Panc1 (cell line): ENCODE measurements at regions of chr2 and their contacts with region 1.

Region 1: DNA sequence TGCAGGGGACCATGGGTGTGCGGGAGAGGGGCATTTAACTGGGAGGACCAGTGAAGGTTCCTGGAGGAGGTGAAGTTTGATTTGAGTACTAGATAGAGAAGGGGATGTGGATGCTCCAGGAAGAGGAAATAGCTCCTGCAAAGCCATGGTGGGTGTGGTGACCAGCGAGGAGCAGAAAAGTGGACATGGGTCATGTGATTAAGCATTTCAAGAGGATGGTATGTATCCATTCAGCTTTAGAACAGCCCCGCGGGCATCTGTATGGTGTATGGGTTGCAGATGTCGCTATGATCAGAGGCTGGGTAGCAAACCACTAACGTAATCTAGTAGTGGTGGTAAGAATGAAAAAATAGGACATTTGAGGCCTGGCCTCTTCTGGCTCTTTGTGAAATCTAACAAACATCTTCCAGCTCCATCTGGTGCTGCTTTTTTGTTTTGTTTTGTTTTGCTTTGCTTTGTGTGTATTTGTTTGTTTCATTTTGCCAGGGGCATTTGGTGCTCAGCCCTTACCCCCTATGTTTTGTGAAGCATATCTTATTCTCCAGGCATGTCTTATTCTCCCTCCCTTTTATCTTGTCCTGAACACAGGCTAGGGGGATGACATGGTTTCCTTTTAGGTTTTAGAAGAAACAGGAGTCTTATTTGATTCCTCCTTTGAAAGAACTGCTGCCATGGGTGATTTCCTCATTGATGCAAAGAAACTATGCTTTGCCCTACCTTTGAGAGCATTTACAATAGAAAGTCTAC is 226.1 kb downstream of the LRRTM1 start:
- DNase-seq: no peak
- ATAC-seq: no peak
- H3K4me3 ChIP-seq: no peak overlapping the region
- H3K27ac ChIP-seq: no peak overlapping the region
- H3K4me1 ChIP-seq: no peaks in the 10 kb centered on the region
- H3K27me3 ChIP-seq: no peaks in the 10 kb centered on the region; the same call in 1 of the 2 replicates
- CTCF ChIP-seq: no peak

Region 2: GRCh38 chr2:79622508-79622907 is 456.0 kb before region 1 on chr2:
- CTCF ChIA-PET with region 1: no interaction called
- POLR2A ChIA-PET with region 1: no interaction called
- in situ Hi-C with region 1: no loop called
- intact Hi-C with region 1: no loop called
- DNase-seq: no peak
- ATAC-seq: no peak
- H3K4me3 ChIP-seq: no peak overlapping the region
- H3K27ac ChIP-seq: no peak overlapping the region
- H3K4me1 ChIP-seq: no peaks in the 10 kb centered on the region
- H3K27me3 ChIP-seq: no peaks in the 10 kb centered on the region
- CTCF ChIP-seq: no peak

Region 3: DNA sequence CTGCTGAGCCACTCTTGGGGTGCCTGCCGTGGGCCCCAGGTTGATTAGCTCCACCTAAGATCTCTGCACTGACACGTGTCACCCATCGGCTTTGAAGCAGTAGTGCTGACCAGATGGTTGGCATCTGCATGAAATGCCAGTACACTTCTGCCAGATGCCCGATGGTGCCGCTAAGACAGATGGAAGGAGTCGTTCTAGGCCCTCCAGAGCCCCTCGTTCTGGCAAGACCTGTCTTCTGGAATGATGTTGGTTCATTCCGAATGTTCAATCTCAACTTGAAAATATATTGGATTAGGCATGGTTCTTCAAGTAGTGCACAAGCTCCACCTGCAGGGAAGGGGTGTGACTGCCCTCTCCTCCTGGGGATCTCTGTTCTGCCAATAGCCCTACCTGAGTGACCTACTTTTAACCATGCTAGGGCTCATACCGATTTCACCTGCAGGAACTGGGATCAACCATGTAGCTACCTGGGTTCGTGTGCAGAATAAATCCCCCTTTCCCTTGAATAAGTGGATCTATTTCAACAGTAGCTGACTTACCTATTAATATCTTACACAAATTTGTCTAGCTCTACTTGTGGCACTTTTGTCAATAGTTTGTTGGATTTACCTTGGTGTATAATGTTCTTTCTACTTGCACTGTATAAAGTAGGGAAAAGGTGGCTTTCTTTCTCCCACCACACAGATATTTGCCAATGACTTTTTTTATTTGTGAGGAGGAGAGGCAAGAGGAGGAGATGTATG is 223.0 kb before region 1 on chr2:
- CTCF ChIA-PET with region 1: no interaction called
- POLR2A ChIA-PET with region 1: no interaction called
- in situ Hi-C with region 1: no loop called
- intact Hi-C with region 1: no loop called
- DNase-seq: no peak
- ATAC-seq: peak; percentile 78
- H3K4me3 ChIP-seq: no peak overlapping the region
- H3K27ac ChIP-seq: no peak overlapping the region
- H3K4me1 ChIP-seq: no peaks in the 10 kb centered on the region
- H3K27me3 ChIP-seq: no peaks in the 10 kb centered on the region
- CTCF ChIP-seq: peak; percentile 74

Region 4: GRCh38 chr2:80638783-80639182 is 560.3 kb after region 1 on chr2:
- CTCF ChIA-PET with region 1: no interaction called
- POLR2A ChIA-PET with region 1: no interaction called
- in situ Hi-C with region 1: no loop called
- intact Hi-C with region 1: no loop called
- DNase-seq: no peak
- ATAC-seq: no peak
- H3K4me3 ChIP-seq: no peak overlapping the region
- H3K27ac ChIP-seq: no peak overlapping the region
- H3K4me1 ChIP-seq: no peaks in the 10 kb centered on the region
- H3K27me3 ChIP-seq: no peaks in the 10 kb centered on the region
- CTCF ChIP-seq: no peak

Region 5: DNA sequence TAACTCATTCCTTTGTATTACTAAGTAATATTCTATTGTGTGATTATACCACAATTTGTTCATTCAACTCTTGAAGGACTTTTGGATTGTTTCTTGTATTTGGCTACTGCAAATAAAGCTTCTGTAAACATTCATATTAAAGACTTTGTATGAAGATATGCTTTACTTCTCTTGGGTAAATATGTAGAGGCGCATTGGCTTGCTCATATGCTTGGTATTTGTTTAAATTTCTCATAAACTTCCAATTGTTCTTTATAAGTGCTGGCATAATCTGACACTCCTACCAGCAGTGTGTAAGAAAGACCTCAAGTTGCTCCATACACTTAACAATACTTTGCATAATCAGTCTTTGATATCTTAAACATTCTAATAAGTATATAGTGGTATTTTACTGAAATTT is 1018.9 kb after region 1 on chr2:
- CTCF ChIA-PET with region 1: no interaction called
- POLR2A ChIA-PET with region 1: no interaction called
- in situ Hi-C with region 1: no loop called
- intact Hi-C with region 1: loop called (anchors 5 kb)
- DNase-seq: no peak
- ATAC-seq: no peak
- H3K4me3 ChIP-seq: no peak overlapping the region
- H3K27ac ChIP-seq: no peak overlapping the region
- H3K4me1 ChIP-seq: no peaks in the 10 kb centered on the region
- H3K27me3 ChIP-seq: no peaks in the 10 kb centered on the region
- CTCF ChIP-seq: no peak